Activated CD4-positive, alpha-beta memory T cell treated with anti-CD3 and anti-CD28 coated beads for 36 hours (primary cell): ENCODE measurements at regions of chr14 and their contacts with region 1.

Region 1: GRCh38 chr14:23588884-23589598 is 10.5 kb upstream of the JPH4 start:
- DNase-seq: peak; percentile 91
- H3K4me3 Mint-ChIP-seq: no peak overlapping the region
- H3K27ac Mint-ChIP-seq: no peak overlapping the region
- H3K4me1 Mint-ChIP-seq: peaks cover 2% of the 10 kb centered on the region
- H3K27me3 Mint-ChIP-seq: peaks cover 15% of the 10 kb centered on the region

Region 2: DNA sequence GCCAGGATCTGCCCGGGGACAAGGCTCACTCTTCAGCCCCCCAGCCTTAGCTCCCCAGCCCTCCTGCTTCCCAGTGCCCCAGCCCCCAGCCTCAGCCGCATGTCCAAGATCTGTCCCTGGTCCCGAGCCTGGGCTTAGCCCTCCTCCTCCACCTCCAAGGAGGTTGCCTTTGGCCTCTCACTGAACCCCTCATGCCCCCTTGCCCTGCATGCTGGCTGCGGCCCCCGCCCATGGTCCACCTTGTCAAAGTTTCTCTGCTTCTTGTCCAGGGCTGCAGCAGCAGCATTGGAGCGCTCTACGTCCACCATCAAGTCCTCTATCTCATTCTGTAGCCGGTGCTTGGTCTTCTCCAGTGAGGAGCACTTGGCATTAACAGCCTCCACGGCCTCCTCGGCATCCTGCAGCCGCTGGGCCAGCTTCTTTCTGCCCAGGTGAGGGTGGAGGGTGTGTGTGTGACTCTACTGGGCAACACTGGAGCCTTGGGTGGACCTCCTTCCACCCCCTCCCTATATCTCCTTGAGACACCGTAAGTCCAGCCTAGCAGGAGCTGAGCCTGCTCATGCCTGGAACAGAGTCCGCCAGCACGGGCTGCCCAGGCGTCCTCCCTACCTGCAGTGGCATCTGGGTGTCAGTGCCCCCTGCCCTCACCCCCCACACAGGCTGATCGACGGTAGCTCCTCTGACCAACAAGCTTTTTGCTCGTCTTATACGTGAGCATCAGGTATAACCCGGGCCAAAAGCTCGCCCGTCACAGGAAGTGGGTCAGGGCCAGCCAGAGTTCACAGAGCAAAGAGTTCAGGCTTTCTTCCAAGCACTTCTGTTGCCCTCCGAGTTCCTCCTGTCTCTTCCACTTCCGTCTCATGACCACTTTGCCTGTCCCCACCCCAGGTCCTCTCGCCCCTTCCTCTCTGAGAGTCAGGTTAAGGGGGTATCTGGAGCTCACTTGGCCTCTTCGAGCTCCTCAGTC is 200.8 kb before region 1 on chr14:
- CTCF ChIA-PET with region 1: no interaction called
- POLR2A ChIA-PET with region 1: no interaction called
- intact Hi-C with region 1: no loop called
- DNase-seq: no peak
- H3K4me3 Mint-ChIP-seq: no peak overlapping the region
- H3K27ac Mint-ChIP-seq: no peak overlapping the region
- H3K4me1 Mint-ChIP-seq: no peaks in the 10 kb centered on the region
- H3K27me3 Mint-ChIP-seq: peaks cover 2% of the 10 kb centered on the region

Region 3: GRCh38 chr14:23605931-23606585 is 17.0 kb after region 1 on chr14:
- CTCF ChIA-PET with region 1: interaction called, 16 read pairs
- POLR2A ChIA-PET with region 1: interaction called, 4 read pairs
- intact Hi-C with region 1: loop called (anchors 1 kb)
- DNase-seq: peak; percentile 53
- H3K4me3 Mint-ChIP-seq: no peak overlapping the region
- H3K27ac Mint-ChIP-seq: peak overlapping the region; percentile 87
- H3K4me1 Mint-ChIP-seq: peaks cover 44% of the 10 kb centered on the region
- H3K27me3 Mint-ChIP-seq: no peaks in the 10 kb centered on the region

Region 4: GRCh38 chr14:23640524-23641141 is 51.6 kb after region 1 on chr14:
- CTCF ChIA-PET with region 1: interaction called, 10 read pairs
- POLR2A ChIA-PET with region 1: no interaction called
- intact Hi-C with region 1: no loop called
- DNase-seq: no peak
- H3K4me3 Mint-ChIP-seq: no peak overlapping the region
- H3K27ac Mint-ChIP-seq: no peak overlapping the region
- H3K4me1 Mint-ChIP-seq: no peaks in the 10 kb centered on the region
- H3K27me3 Mint-ChIP-seq: no peaks in the 10 kb centered on the region

Region 5: DNA sequence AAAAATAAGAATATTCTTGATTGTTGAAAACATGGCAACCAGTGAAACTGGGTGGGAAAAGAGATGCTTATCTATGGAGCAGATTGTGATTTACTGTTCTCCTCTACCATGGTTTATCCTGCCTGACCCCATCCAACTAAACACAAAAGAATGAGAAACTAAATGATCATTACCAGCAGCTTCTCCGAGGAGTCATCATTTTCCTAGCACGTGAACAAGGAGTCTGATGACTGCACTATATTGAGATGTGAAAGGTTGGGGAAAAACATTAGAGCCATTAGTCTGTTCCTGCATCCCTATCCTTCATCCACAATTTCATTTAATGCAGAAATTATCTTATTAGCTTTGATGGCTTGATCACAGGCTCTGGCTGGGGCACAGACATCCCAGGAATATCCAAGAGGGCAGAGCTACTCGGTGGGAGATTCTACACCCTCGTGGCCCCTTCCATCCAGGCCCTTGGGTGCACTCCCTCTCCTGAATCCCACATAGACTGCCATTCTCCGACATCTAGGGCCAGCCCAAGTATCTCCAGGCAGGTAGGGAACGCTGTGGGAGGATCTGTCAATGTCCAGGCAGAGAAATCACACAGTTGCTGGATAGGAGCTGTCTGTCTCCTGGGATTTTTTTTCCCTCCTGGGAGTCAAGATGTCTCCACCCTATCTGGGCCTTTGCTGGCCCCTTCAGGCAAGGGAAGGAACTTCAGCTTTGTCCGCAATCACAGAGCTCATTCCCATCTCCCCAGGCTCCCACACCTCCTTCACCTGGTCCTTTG is 321.2 kb after region 1 on chr14:
- CTCF ChIA-PET with region 1: interaction called, 35 read pairs
- POLR2A ChIA-PET with region 1: no interaction called
- intact Hi-C with region 1: loop called (anchors 1 kb)
- DNase-seq: peak; percentile 42
- H3K4me3 Mint-ChIP-seq: no peak overlapping the region
- H3K27ac Mint-ChIP-seq: no peak overlapping the region
- H3K4me1 Mint-ChIP-seq: no peaks in the 10 kb centered on the region
- H3K27me3 Mint-ChIP-seq: peaks cover 14% of the 10 kb centered on the region

Region 6: DNA sequence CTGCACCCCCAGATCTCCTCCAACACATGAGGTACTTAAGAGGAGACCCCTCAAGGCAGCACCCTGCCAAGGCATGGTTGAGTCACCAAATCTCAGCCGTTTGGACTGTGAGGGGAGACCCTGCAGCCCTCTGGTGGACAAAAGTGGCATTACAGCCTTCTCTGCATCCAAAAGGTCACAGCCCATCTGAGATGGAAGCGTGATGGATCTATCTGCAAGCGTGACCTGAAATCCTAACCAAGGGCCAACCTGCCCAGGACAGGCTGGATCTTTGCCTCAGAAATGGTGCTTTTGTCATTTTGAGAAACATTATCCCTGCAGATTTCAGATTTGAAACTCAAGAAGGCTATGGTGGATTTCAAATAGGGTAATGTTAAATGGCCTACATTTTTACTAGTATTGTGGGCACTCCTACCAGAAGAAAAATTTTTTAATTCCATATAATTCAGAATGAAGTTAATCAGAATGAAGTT is 340.8 kb after region 1 on chr14:
- CTCF ChIA-PET with region 1: interaction called, 38 read pairs
- POLR2A ChIA-PET with region 1: no interaction called
- intact Hi-C with region 1: loop called (anchors 1 kb)
- DNase-seq: peak; percentile 88
- H3K4me3 Mint-ChIP-seq: no peak overlapping the region
- H3K27ac Mint-ChIP-seq: no peak overlapping the region
- H3K4me1 Mint-ChIP-seq: no peaks in the 10 kb centered on the region
- H3K27me3 Mint-ChIP-seq: peaks cover 3% of the 10 kb centered on the region